ENCODE measurements at regions of chr5 and their contacts with region 1.

Region 1: GRCh38 chr5:172764849-172765765 is 5.9 kb downstream of the DUSP1 start:
- DNase-seq: peak; percentile 95
- H3K4me3 Mint-ChIP-seq: peak overlapping the region; percentile 76
- H3K27ac Mint-ChIP-seq: peak overlapping the region; percentile 87
- H3K4me1 Mint-ChIP-seq: peaks cover 38% of the 10 kb centered on the region
- H3K27me3 Mint-ChIP-seq: peaks cover 6% of the 10 kb centered on the region

Region 2: DNA sequence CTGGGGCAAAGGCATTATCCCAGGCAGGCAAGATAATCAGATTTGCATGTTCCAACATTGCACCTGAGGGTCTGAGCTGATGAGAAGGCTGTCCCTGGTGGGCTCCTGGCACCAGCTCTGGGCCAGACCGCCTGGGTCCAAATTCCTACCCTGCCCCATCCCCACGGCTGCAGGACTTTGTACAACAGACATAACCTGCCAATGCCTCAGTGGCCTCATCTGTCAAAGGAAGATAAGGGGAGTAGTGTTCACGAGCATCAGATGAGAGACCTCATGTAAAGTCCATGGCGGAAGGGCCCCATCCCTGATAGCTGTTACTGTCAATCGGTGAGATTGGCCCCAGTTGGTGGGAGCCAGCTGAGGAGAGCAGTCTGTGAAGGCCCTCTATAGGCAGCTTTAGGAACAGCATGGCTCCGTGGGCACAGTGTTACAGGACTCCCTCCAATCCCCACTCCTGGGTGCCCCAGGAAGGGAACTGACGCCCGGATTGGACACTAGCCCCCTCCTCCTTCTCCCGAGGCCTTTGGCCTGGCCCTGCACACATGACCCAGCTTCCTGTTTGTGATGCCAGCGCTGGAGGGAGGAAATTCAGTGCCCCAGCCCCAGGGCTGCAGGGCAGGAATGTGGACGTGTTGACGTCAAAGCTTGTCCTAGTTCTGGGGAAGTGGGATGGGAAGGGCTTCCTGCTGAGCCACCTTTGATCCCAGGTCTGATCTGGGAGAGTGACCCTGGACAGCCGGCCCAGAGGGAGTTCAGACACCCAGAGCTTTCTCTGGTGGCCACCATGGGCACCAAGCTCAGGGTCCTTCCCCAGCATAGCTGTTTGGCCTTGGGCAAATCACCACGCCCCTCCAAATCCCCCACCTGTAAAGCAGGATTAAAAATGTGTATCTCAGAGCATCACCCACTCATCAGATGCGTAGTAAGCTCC is 50.4 kb before region 1 on chr5:
- intact Hi-C with region 1: loop called (anchors 1 kb)
- DNase-seq: peak; percentile 45
- H3K4me3 Mint-ChIP-seq: no peak overlapping the region
- H3K27ac Mint-ChIP-seq: no peak overlapping the region
- H3K4me1 Mint-ChIP-seq: no peaks in the 10 kb centered on the region
- H3K27me3 Mint-ChIP-seq: peaks cover 7% of the 10 kb centered on the region

Region 3: GRCh38 chr5:172777881-172778814 is 13.0 kb after region 1 on chr5:
- intact Hi-C with region 1: loop called (anchors 1 kb)
- DNase-seq: no peak
- H3K4me3 Mint-ChIP-seq: peak overlapping the region; percentile 55
- H3K27ac Mint-ChIP-seq: peak overlapping the region; percentile 94
- H3K4me1 Mint-ChIP-seq: peaks cover 45% of the 10 kb centered on the region
- H3K27me3 Mint-ChIP-seq: no peaks in the 10 kb centered on the region

Region 4: DNA sequence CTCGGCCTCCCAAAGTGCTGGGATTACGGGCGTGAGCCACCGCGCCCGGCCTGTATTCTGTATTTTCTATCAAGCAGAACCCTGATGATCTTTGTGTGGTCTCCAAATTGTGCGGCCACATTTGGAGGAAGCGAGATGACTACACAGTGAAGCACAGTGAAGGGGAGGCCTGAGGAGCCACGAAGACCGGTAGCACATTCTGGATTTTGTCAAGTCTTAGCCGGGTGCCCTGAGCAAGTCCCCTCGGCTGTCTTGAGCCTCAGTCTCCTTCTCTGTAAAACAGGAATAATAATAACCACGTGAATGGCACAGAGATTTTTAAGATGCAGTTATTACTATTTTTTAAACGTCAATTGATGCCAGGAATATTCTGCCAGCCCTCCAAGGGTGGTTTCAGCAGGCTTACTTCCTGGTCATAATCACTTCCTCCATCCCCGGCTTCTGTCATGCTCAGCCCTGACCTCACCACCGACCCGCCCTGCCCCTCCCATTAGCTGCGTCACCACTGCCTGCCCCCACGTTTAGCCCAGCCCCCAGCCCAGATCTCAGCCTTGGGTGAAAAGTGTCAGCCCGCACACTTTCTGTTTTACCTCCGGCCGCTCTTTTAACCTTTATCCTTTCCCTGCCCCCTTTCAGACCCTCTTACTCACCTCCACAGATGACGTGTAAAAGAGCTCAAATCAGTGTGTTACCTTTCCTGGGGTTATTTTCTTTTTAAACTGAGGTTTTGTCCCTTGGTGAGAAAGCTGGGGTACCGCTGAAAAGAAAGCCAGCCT is 42.0 kb after region 1 on chr5:
- intact Hi-C with region 1: loop called (anchors 1 kb)
- DNase-seq: peak; percentile 74
- H3K4me3 Mint-ChIP-seq: peak overlapping the region; percentile 43
- H3K27ac Mint-ChIP-seq: peak overlapping the region; percentile 91
- H3K4me1 Mint-ChIP-seq: peaks cover 15% of the 10 kb centered on the region
- H3K27me3 Mint-ChIP-seq: no peaks in the 10 kb centered on the region

Region 5: GRCh38 chr5:172833686-172834414 is 68.7 kb after region 1 on chr5 and contains the start of gene ERGIC1:
- intact Hi-C with region 1: loop called (anchors 1 kb)
- DNase-seq: peak; percentile 79
- H3K4me3 Mint-ChIP-seq: peak within 1 kb of the TSS; percentile 88
- H3K27ac Mint-ChIP-seq: peak within 1 kb of the TSS; percentile 85
- H3K4me1 Mint-ChIP-seq: peaks cover 19% of the 10 kb centered on the region
- H3K27me3 Mint-ChIP-seq: no peaks in the 10 kb centered on the region
- total RNA-seq, gene ERGIC1: 47.4 and 47.9 TPM in 2 replicates

Region 6: DNA sequence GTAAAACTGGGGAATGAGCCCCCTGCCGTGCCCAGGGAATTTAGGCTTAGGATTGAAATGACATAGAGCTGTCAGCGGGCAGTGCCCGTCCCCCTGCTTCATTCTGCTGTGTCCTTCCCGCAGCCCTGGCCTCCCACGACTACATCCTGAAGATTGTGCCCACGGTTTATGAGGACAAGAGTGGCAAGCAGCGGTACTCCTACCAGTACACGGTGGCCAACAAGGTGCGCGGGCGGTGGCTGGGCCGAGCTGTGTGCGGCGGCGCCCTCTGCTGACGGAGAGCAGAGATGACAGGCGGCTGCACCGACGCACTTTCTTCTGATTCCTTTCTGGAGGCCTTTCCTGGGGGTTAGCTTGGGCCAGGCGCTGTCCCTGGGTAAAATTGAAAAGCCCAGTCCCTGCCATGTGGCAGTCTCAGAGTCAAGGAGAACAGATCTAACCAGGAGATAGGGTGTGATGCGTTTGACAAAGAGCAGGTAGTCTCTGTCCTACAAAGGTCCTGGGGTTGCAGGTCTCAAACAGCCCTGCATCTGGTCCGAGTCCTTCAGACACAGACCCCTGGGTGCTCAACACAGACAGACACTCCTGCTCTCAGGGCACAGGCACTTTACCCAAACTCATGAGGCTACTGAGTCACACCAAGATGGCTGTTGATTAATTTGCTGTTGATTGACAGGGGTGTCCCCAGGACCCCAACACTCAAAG is 167.4 kb after region 1 on chr5:
- intact Hi-C with region 1: loop called (anchors 2 kb)
- DNase-seq: peak; percentile 50
- H3K4me3 Mint-ChIP-seq: no peak overlapping the region
- H3K27ac Mint-ChIP-seq: peak overlapping the region; percentile 7
- H3K4me1 Mint-ChIP-seq: peaks cover 8% of the 10 kb centered on the region
- H3K27me3 Mint-ChIP-seq: no peaks in the 10 kb centered on the region

Region 7: DNA sequence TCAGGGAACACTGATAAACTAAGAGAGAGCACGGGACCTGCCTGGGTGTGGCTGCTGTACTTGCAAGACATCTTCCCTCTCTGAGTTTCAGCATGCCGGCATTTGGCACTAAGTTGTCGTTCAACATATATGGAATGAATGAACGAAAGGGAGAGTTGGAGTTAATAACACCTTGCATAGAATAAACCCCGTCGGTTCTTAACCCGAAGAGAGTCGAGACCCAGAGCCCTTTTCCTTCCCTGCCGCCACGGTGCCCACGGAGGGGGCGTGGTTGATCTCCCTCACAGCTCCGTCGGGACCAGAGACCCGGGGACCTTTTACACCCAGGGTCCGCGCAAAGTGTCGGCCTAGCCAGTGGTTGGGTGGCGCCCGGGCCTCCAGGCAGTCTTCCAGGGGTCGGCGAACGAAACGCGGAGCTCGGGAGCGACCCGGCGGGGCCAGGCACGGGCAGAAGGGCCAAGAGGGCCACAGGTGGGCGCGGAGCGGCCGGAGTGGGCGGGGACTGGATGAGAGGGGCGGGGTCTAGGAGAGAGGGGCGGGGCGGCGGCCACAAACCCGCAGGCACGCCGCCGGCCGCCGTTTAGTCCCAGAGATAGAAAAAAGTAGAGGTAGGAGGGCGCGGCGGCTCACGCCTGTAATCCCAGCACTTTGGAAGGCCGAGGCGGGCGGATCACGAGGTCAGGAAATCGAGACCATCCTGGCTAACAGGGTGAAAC is 193.4 kb after region 1 on chr5:
- intact Hi-C with region 1: loop called (anchors 1 kb)
- DNase-seq: peak; percentile 51
- H3K4me3 Mint-ChIP-seq: peak overlapping the region; percentile 99
- H3K27ac Mint-ChIP-seq: peak overlapping the region; percentile 98
- H3K4me1 Mint-ChIP-seq: peaks cover 27% of the 10 kb centered on the region
- H3K27me3 Mint-ChIP-seq: peaks cover 6% of the 10 kb centered on the region